PC-9 (cell line): ENCODE measurements at regions of chr3 and their contacts with region 1.

Region 1: GRCh38 chr3:112128843-112129727 is 4.0 kb downstream of the GCSAM start:
- DNase-seq: peak; percentile 39 to 90
- H3K4me3 ChIP-seq: no peak overlapping the region
- H3K27ac ChIP-seq: peak overlapping the region; percentile 53
- H3K4me1 ChIP-seq: peaks cover 36% of the 10 kb centered on the region
- H3K27me3 ChIP-seq: no peaks in the 10 kb centered on the region
- CTCF ChIP-seq: no peak

Region 2: DNA sequence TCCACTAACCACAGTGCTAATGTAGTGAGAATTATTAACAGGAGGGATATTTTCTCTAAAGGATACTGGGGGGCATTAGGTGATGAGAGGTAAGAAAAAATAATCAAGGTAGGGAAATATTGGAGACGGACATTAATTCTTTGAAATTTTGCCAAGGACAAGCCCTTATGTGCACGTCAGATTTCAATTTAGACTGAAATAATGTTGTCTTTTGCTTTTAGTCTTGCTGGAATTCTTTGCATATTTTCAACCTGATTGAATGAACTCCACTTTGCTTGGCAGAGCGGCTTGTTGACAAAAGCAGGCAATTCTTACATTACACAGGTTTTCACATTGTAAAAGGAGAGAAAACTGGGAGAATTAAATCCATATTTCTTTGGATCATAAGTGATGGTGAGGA is 67.9 kb before region 1 on chr3:
- CTCF ChIA-PET with region 1: no interaction called
- POLR2A ChIA-PET with region 1: no interaction called
- intact Hi-C with region 1: no loop called
- DNase-seq: no peak
- H3K4me3 ChIP-seq: no peak overlapping the region
- H3K27ac ChIP-seq: no peak overlapping the region
- H3K4me1 ChIP-seq: peaks cover 8% of the 10 kb centered on the region
- H3K27me3 ChIP-seq: no peaks in the 10 kb centered on the region
- CTCF ChIP-seq: no peak

Region 3: DNA sequence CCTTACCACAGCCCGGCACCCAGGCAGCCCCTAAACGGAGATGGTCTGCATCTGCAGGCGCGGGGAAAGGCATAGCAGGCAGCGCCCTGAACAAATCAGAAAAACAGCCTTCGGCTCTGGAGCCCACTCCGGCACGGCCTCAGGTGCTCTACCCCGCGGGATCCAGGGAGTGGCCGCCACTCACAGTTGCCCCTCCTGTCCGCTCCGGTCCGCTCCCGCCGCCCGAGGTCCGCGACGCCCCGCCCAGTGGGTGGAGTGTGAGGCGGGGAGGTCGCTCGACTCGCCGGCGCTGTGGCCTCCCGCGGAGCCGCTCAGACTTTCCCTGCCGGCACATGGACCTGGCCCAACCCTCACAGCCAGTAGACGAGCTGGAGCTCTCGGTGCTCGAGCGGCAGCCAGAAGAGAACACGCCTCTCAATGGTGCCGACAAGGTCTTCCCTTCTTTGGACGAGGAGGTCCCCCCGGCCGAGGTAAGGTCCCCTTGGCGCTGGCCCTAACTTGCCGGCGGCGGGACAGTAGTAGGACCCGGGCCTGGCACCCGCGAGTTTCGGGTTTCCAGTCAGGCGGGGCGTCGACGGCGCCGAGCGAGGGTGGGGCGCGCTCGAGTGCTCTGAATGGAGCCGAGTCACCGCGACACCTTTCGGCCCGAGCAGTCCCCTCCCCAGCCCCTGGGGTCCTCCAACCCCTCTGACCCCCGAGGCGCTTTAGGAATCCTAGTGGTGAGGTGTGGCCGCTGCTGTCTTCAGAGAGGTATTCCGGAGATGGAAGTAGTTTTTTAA is 42.8 kb before region 1 on chr3 and contains the start of gene C3orf52:
- CTCF ChIA-PET with region 1: no interaction called
- POLR2A ChIA-PET with region 1: no interaction called
- intact Hi-C with region 1: loop called (anchors 1 kb)
- DNase-seq: peak; percentile 87 to 94
- H3K4me3 ChIP-seq: peak within 1 kb of the TSS; percentile 80
- H3K27ac ChIP-seq: peak within 1 kb of the TSS; percentile 81
- H3K4me1 ChIP-seq: peaks cover 47% of the 10 kb centered on the region
- H3K27me3 ChIP-seq: no peaks in the 10 kb centered on the region
- CTCF ChIP-seq: no peak; the same call in 1 of the 2 replicates
- total RNA-seq, gene C3orf52: 7.5 and 9.9 TPM in 2 replicates